Gastrocnemius medialis (tissue), 4 donors: ENCODE measurements at regions of chr20 and their contacts with region 1.

Region 1: DNA sequence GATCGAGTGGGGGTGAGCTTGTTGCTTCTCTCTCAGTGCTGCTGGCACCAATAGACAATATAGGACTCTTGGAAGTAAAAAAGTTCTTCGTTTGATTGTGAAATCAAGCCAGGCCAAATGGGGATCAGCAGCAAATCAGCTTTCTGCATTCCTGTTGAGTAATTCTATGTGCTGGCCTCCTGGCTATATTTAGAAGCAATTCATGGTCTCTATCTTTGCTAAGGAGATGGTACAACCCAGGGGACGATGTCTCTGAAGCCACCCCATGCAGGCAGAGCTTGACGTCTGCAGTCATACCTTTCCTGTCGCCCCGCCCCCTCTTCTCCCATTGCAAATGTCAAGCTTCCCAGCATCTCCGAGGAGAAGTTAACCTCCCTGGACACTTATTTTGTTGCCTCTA is 199.1 kb downstream of the SCP2D1 start:
- DNase-seq: no peak
- ATAC-seq: peak; percentile 83 to 86
- H3K4me3 ChIP-seq: no peak overlapping the region
- H3K27ac ChIP-seq: no peak overlapping the region
- H3K4me1 ChIP-seq: peaks cover 0 to 17% of the 10 kb centered on the region in 2 donors
- H3K27me3 ChIP-seq: no peaks in the 10 kb centered on the region
- CTCF ChIP-seq: no peak
- POLR2A ChIP-seq: no peak

Region 2: GRCh38 chr20:18380908-18381529 is 631.7 kb before region 1 on chr20:
- in situ Hi-C with region 1: no loop called
- intact Hi-C with region 1: no loop called
- DNase-seq: no peak
- ATAC-seq: no peak
- H3K4me3 ChIP-seq: no peak overlapping the region
- H3K27ac ChIP-seq: no peak overlapping the region
- H3K4me1 ChIP-seq: no peaks in the 10 kb centered on the region
- H3K27me3 ChIP-seq: no peaks in the 10 kb centered on the region
- CTCF ChIP-seq: no peak
- POLR2A ChIP-seq: no peak

Region 3: DNA sequence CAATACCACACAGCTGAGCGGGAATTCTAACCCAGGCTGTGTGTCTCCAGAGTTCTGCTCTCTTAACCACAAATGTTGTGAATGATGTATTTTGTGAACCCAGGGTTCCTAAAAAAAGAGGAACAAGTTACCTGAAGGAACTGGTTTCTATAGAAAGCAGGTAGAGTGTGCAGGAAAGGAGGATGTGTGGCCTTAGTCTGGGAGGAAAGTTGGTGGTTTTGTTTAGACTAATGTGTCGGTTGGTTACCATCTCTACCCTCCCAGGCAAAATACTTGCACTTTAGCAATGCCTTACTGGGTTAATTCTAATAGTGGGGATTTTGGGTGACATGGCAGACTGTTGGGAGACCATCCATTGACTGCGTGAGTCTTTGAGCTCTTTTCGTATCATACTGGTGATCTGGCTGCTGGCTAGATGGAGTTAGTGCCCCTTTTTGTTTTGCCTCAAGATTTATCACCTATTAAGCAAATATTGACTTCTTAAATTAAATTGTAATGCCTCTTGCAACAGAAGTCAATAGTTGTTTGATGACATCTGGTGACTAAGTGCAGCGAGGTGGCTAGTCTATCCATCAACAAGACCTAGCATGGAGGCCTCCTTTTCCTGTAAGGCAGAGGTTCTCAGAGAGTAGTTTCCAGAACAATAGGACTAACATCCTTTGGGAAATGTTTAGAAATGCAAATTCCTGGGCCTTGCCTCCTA is 55.6 kb before region 1 on chr20:
- in situ Hi-C with region 1: no loop called
- intact Hi-C with region 1: loop called (anchors 5 kb)
- DNase-seq: no peak
- ATAC-seq: no peak
- H3K4me3 ChIP-seq: no peak overlapping the region
- H3K27ac ChIP-seq: no peak overlapping the region
- H3K4me1 ChIP-seq: no peaks in the 10 kb centered on the region
- H3K27me3 ChIP-seq: no peaks in the 10 kb centered on the region
- CTCF ChIP-seq: no peak
- POLR2A ChIP-seq: no peak